ENCODE measurements at regions of chr17 and their contacts with region 1.

Region 1: GRCh38 chr17:39153599-39154051 is 2.2 kb upstream of the PLXDC1 start:
- DNase-seq: peak; percentile 71
- ATAC-seq: peak; percentile 73
- H3K4me3 ChIP-seq: peak overlapping the region; percentile 87
- H3K27ac ChIP-seq: peak overlapping the region; percentile 62
- H3K4me1 ChIP-seq: peaks cover 8% of the 10 kb centered on the region
- H3K27me3 ChIP-seq: peaks cover 5 to 13% of the 10 kb centered on the region in 2 experiments
- CTCF ChIP-seq: no peak
- EP300 ChIP-seq: no peak; a peak in 1 of 4 replicates
- POLR2A ChIP-seq: no peak
- RAD21 ChIP-seq: no peak

Region 2: DNA sequence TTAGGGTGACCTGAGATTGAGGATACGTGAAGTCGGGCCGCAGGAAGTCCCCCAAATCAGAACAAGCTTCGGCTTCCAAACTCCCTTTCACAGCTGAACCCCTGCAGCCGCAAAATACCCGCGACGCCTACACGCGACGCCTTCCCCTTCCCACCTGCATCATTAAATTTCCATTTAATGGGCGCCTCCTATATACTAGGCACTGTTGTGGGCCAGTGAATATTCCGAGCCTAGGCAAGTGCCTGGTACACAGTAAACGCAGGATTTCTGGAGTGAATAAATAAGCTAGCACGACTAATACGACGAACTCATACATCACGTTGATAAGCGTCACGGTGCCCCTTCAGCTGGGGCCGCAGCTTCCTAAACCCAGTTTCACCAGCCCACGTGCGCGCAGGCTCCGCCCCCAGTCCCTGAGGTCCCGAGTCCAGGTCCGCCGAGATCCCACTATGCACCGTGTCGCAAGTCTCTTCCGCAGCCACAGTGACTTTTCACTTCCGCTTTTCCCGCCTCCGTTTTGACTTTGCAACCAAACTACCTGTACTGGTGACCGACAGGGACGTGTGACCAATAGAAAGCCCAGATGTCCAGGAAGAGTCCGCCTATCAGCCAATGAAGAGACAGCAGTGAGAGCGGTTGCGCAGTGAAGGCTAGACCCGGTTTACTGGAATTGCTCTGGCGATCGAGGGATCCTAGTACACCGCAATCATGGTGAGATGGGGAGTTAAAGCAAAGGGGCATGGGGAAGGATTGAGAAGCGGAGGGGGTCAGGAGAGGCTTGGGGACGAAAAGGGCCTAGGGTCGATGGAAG is 401.3 kb before region 1 on chr17 and contains the start of gene PSMB3:
- CTCF ChIA-PET with region 1: interaction called, 3 read pairs
- POLR2A ChIA-PET with region 1: interaction called, 3 read pairs
- RAD21 ChIA-PET with region 1: interaction called, 4 read pairs
- SMC1A ChIA-PET with region 1: interaction called, 6 read pairs
- in situ Hi-C with region 1: loop called (anchors 10 kb)
- intact Hi-C with region 1: no loop called
- DNase-seq: peak; percentile 100
- ATAC-seq: peak; percentile 82
- H3K4me3 ChIP-seq: peak within 1 kb of the TSS; percentile 87
- H3K27ac ChIP-seq: peak within 1 kb of the TSS; percentile 86
- H3K4me1 ChIP-seq: peaks cover 15% of the 10 kb centered on the region; the same call in 1 of the 2 replicates
- H3K27me3 ChIP-seq: no peaks in the 10 kb centered on the region; a peak in 1 of 4 replicates
- CTCF ChIP-seq: no peak
- EP300 ChIP-seq: peak in 1 of 2 experiments; percentile 9; a peak in 1 of 4 replicates
- POLR2A ChIP-seq: peak; percentile 79
- RAD21 ChIP-seq: no peak
- polyA plus RNA-seq, gene PSMB3: 1,622 to 2,130 TPM

Region 3: DNA sequence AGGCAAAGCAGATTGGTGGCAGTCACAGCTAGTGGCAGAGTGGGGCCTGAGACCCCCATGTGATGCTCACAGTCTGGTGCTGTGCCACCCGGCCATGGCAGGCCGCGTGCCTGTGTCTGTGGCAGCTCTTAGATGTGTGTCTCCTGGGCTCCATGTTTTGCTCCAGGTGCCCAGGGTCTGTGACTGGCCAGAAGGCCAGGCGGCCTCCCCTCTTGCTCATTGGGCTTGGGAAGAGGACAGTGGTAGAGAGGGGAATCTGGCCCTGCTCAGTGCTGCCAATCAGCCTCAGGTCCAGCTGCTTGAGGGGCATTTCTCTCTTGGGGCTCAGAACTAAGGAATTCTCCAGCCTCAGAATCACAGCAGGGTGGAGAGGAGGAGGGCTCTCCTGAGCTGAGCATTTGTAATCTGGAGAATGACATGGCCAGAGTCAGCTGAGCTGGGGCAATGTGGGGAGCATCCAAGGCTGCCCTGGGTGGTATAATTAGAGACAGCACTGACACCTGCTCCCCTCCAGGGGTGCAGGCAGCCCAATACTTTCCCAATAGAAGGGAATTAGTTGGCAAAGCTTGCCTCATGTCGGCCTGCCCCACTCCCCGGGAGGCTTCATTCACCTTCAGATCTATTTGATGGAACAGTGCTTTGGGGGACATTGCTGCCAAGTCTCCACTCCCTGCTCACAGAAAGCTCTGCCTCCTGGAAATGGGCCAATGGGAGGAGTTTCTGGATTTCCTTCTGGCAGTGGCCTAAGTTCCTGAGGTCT is 230.9 kb before region 1 on chr17:
- CTCF ChIA-PET with region 1: interaction called, 13 read pairs
- POLR2A ChIA-PET with region 1: no interaction called
- RAD21 ChIA-PET with region 1: no interaction called
- SMC1A ChIA-PET with region 1: no interaction called
- in situ Hi-C with region 1: no loop called
- intact Hi-C with region 1: no loop called
- DNase-seq: no peak
- ATAC-seq: peak; percentile 40; the same call in 2 of the 3 replicates
- H3K4me3 ChIP-seq: no peak overlapping the region
- H3K27ac ChIP-seq: no peak overlapping the region
- H3K4me1 ChIP-seq: peaks cover 3% of the 10 kb centered on the region
- H3K27me3 ChIP-seq: no peaks in the 10 kb centered on the region
- CTCF ChIP-seq: no peak
- EP300 ChIP-seq: no peak
- POLR2A ChIP-seq: peak; percentile 51
- RAD21 ChIP-seq: no peak

Region 4: GRCh38 chr17:39069114-39069756 is 84.4 kb before region 1 on chr17:
- CTCF ChIA-PET with region 1: interaction called, 20 read pairs
- POLR2A ChIA-PET with region 1: interaction called, 3 read pairs
- RAD21 ChIA-PET with region 1: interaction called, 10 read pairs
- SMC1A ChIA-PET with region 1: interaction called, 18 read pairs
- in situ Hi-C with region 1: loop called (anchors 5 kb)
- intact Hi-C with region 1: loop called (anchors 1 kb)
- DNase-seq: no peak
- ATAC-seq: peak; percentile 89
- H3K4me3 ChIP-seq: no peak overlapping the region
- H3K27ac ChIP-seq: no peak overlapping the region
- H3K4me1 ChIP-seq: no peaks in the 10 kb centered on the region
- H3K27me3 ChIP-seq: peaks cover 0 to 5% of the 10 kb centered on the region in 2 experiments; a peak in 2 of 4 replicates
- CTCF ChIP-seq: peak; percentile 68 to 79 (median 69); a peak in 5 of 6 replicates
- EP300 ChIP-seq: no peak
- POLR2A ChIP-seq: no peak
- RAD21 ChIP-seq: peak; percentile 82

Region 5: DNA sequence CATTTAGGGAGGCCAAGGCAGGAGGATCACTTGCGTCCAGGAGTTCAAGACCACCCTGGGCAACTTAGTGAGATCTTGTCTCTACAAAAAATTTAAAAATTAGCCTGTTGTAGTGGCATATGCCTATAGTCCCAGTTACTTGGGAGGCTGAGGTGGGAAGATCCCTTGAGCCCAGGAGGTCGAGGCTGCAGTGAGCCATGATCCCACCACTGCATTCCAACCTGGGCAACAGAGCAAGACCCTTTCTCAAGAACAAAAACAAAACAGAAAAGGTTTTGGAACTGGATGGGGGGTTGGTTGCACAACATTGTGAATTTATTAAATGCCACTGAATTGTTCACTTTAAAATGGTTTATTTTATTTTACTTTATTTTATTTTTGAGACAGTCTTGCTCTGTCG is 23.4 kb before region 1 on chr17:
- CTCF ChIA-PET with region 1: no interaction called
- POLR2A ChIA-PET with region 1: no interaction called
- RAD21 ChIA-PET with region 1: no interaction called
- SMC1A ChIA-PET with region 1: no interaction called
- in situ Hi-C with region 1: no loop called
- intact Hi-C with region 1: no loop called
- DNase-seq: no peak
- ATAC-seq: no peak
- H3K4me3 ChIP-seq: no peak overlapping the region
- H3K27ac ChIP-seq: no peak overlapping the region
- H3K4me1 ChIP-seq: no peaks in the 10 kb centered on the region
- H3K27me3 ChIP-seq: no peaks in the 10 kb centered on the region; a peak in 1 of 4 replicates
- CTCF ChIP-seq: no peak
- EP300 ChIP-seq: no peak
- POLR2A ChIP-seq: no peak
- RAD21 ChIP-seq: no peak

Region 6: GRCh38 chr17:39174907-39175694 is 21.5 kb after region 1 on chr17:
- CTCF ChIA-PET with region 1: interaction called, 26 read pairs
- POLR2A ChIA-PET with region 1: interaction called, 3 read pairs
- RAD21 ChIA-PET with region 1: interaction called, 24 read pairs
- SMC1A ChIA-PET with region 1: interaction called, 4 read pairs
- in situ Hi-C with region 1: no loop called
- intact Hi-C with region 1: no loop called
- DNase-seq: no peak
- ATAC-seq: peak; percentile 93
- H3K4me3 ChIP-seq: no peak overlapping the region
- H3K27ac ChIP-seq: no peak overlapping the region
- H3K4me1 ChIP-seq: no peaks in the 10 kb centered on the region
- H3K27me3 ChIP-seq: no peaks in the 10 kb centered on the region
- CTCF ChIP-seq: peak; percentile 69 to 83 (median 81)
- EP300 ChIP-seq: no peak
- POLR2A ChIP-seq: no peak
- RAD21 ChIP-seq: peak; percentile 49

Region 7: DNA sequence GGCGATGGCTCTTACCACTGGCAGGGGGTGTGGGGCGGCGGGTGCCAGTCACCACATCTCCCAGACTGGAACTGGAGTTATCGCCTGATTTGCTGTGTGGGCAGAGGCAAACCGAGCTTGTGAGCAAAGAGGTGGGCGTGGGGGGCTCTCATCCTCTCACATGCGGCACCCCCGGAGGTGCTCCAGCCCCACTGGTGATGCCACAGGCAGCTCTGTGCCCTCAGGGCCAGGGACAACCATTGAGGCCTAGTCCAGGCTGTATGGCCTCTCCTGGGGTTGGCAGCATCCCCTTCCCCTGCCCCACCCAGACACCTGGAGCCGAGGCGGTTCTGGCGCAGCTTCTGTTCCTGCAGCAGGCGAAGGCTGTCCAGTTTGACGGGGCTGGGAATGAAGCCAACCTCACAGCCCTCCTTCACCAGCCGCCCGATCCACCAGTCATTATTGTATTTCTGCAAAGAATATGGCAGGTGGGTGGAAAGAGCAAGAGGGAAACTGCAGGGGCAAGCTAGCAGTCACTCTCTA is 32.9 kb after region 1 on chr17:
- CTCF ChIA-PET with region 1: no interaction called
- POLR2A ChIA-PET with region 1: no interaction called
- RAD21 ChIA-PET with region 1: no interaction called
- SMC1A ChIA-PET with region 1: no interaction called
- in situ Hi-C with region 1: no loop called
- intact Hi-C with region 1: no loop called
- DNase-seq: no peak
- ATAC-seq: no peak
- H3K4me3 ChIP-seq: no peak overlapping the region
- H3K27ac ChIP-seq: no peak overlapping the region
- H3K4me1 ChIP-seq: no peaks in the 10 kb centered on the region
- H3K27me3 ChIP-seq: no peaks in the 10 kb centered on the region
- CTCF ChIP-seq: no peak
- EP300 ChIP-seq: no peak
- POLR2A ChIP-seq: no peak
- RAD21 ChIP-seq: no peak

Region 8: DNA sequence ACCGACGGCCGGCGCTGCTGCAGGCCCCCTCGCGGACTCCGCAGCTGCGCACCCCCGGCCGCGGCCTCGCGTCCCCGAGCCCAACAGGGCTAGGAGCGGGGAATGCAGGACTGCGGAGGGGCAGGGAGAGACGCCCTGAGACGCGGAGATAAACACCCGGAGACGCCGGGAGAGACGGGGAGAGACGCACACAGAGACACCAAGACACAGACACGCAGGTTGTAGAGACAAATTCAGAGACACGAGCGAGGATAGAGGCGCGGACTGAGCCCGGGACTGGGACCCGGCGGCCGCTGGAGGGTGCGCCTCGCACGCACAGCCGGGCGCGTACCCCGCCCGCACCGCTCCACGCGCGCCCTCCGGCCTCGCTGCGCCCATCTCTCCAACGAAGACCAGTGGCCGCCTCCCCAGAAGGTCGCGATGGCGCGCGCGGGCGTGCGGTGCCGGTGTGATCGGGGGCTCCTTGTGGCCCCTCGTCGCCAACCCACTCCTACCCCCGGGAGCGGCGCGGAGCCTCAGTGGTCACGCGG is 71.2 kb after region 1 on chr17:
- CTCF ChIA-PET with region 1: no interaction called
- POLR2A ChIA-PET with region 1: no interaction called
- RAD21 ChIA-PET with region 1: no interaction called
- SMC1A ChIA-PET with region 1: no interaction called
- in situ Hi-C with region 1: no loop called
- intact Hi-C with region 1: no loop called
- DNase-seq: no peak
- ATAC-seq: peak; percentile 38; the same call in 1 of the 3 replicates
- H3K4me3 ChIP-seq: no peak overlapping the region
- H3K27ac ChIP-seq: no peak overlapping the region
- H3K4me1 ChIP-seq: no peaks in the 10 kb centered on the region
- H3K27me3 ChIP-seq: peaks cover 4 to 8% of the 10 kb centered on the region in 2 experiments; a peak in 3 of 4 replicates
- CTCF ChIP-seq: no peak
- EP300 ChIP-seq: no peak
- POLR2A ChIP-seq: no peak
- RAD21 ChIP-seq: no peak

Region 9: GRCh38 chr17:39244600-39245570 is 91.3 kb after region 1 on chr17:
- CTCF ChIA-PET with region 1: interaction called, 31 read pairs
- POLR2A ChIA-PET with region 1: no interaction called
- RAD21 ChIA-PET with region 1: interaction called, 24 read pairs
- SMC1A ChIA-PET with region 1: interaction called, 18 read pairs
- in situ Hi-C with region 1: no loop called
- intact Hi-C with region 1: loop called (anchors 5 kb)
- DNase-seq: peak; percentile 40
- ATAC-seq: peak; percentile 96
- H3K4me3 ChIP-seq: no peak overlapping the region
- H3K27ac ChIP-seq: no peak overlapping the region
- H3K4me1 ChIP-seq: peaks cover 9% of the 10 kb centered on the region
- H3K27me3 ChIP-seq: no peaks in the 10 kb centered on the region; a peak in 2 of 4 replicates
- CTCF ChIP-seq: peak; percentile 90 to 97 (median 94); a peak in 5 of 6 replicates
- EP300 ChIP-seq: no peak
- POLR2A ChIP-seq: no peak
- RAD21 ChIP-seq: peak; percentile 90